ENCODE measurements at regions of chr9 and their contacts with region 1.

Region 1: DNA sequence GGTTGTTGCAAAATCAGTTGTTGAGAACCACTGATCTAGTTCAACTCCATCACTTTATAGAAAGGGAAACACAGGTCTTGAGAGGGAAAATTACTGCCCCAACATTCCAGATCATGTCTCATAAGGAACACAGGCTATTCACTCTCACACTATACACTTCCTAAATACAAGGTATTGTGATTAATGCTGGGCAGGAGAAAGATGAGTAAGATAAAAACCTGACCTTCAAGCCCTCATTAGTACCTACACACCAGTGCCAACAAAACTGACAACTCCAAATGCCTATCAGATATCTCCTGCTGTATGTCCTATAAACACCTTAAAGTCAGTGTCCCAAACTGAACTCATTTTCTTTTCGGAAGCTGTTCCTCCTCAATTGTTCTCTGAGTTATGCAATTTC is 8.2 kb downstream of the GNE start:
- DNase-seq: no peak
- H3K4me3 ChIP-seq: no peak overlapping the region
- H3K4me3 Mint-ChIP-seq: no peak overlapping the region
- H3K27ac Mint-ChIP-seq: no peak overlapping the region
- H3K4me1 ChIP-seq: no peaks in the 10 kb centered on the region
- H3K4me1 Mint-ChIP-seq: peaks cover 15% of the 10 kb centered on the region
- H3K27me3 ChIP-seq: no peaks in the 10 kb centered on the region
- H3K27me3 Mint-ChIP-seq: no peaks in the 10 kb centered on the region
- CTCF ChIP-seq: no peak

Region 2: GRCh38 chr9:36328798-36329411 is 78.8 kb after region 1 on chr9:
- CTCF ChIA-PET with region 1: interaction called, 3 read pairs
- POLR2A ChIA-PET with region 1: no interaction called
- intact Hi-C with region 1: loop called (anchors 1 kb)
- DNase-seq: peak; percentile 53 to 67
- H3K4me3 ChIP-seq: no peak overlapping the region
- H3K4me3 Mint-ChIP-seq: no peak overlapping the region
- H3K27ac Mint-ChIP-seq: no peak overlapping the region
- H3K4me1 ChIP-seq: peaks cover 11% of the 10 kb centered on the region
- H3K4me1 Mint-ChIP-seq: peaks cover 25% of the 10 kb centered on the region
- H3K27me3 ChIP-seq: no peaks in the 10 kb centered on the region
- H3K27me3 Mint-ChIP-seq: no peaks in the 10 kb centered on the region
- CTCF ChIP-seq: peak; percentile 70 to 87

Measured in Caco-2 (cell line).